Heart left ventricle (tissue), 16 donors: ENCODE measurements at regions of chr3 and their contacts with region 1.

Region 1: DNA sequence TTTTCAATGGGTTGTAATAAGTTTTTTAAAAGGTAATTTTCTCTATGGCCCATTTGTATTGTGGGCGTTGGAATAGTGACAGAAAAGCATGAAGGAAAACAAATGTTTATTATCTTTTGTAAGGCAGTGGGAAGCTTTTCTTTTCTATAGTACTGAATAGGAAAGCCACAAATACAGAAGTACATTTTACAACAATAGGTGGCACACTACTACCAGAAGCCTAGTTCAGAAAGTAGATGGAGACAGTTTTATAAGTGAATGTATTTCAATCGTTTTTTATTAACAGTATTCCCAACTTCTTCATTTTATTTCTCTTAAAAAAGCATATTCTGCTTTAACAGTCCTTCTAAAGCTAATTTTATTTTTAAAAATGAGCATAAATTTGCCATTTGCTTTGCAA is 296.7 kb downstream of the PTPRG start:
- DNase-seq: no peak
- ATAC-seq: peak in 2 of 4 donors; percentile 53 to 59
- H3K4me3 ChIP-seq: no peak overlapping the region
- H3K27ac ChIP-seq: peak overlapping the region in 1 of 12 donors; percentile 10
- H3K4me1 ChIP-seq: peaks cover 0 to 83% (median 40%) of the 10 kb centered on the region in 12 donors
- H3K27me3 ChIP-seq: no peaks in the 10 kb centered on the region
- CTCF ChIP-seq: peak; percentile 34 to 78 (median 66)
- POLR2A ChIP-seq: no peak

Region 2: GRCh38 chr3:61530355-61530754 is 327.7 kb before region 1 on chr3:
- intact Hi-C with region 1: no loop called
- DNase-seq: no peak
- ATAC-seq: no peak
- H3K4me3 ChIP-seq: no peak overlapping the region
- H3K27ac ChIP-seq: no peak overlapping the region
- H3K4me1 ChIP-seq: peaks cover 0 to 9% (median 0%) of the 10 kb centered on the region in 12 donors
- H3K27me3 ChIP-seq: no peaks in the 10 kb centered on the region
- CTCF ChIP-seq: peak; percentile 21 to 65 (median 44)
- POLR2A ChIP-seq: no peak

Region 3: GRCh38 chr3:61841111-61841853 is 16.8 kb before region 1 on chr3:
- intact Hi-C with region 1: no loop called
- DNase-seq: no peak
- ATAC-seq: peak in 3 of 4 donors; percentile 34 to 47 (median 42)
- H3K4me3 ChIP-seq: no peak overlapping the region
- H3K27ac ChIP-seq: no peak overlapping the region
- H3K4me1 ChIP-seq: peaks cover 0 to 61% (median 27%) of the 10 kb centered on the region in 12 donors
- H3K27me3 ChIP-seq: no peaks in the 10 kb centered on the region
- CTCF ChIP-seq: no peak
- POLR2A ChIP-seq: no peak

Region 4: DNA sequence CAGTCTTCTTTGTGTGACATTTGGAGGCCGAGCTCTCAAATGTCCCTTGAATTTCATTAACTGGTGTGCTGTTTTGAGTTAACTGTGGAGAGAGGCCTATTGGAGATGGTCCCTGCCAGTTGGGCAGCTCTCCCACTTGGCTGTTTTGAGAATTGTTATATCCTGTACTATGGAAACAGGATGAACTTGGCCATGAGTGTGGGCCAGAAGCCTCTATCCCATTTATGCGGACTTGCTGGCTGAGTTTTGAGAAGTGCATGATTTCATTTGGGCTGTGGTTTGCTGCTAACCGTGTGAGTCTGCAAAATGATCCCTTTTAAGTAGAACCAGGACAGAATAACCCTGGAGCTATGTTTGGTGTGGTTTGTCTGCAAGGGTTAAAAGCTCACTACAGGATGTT is 69.3 kb after region 1 on chr3:
- intact Hi-C with region 1: loop called in 3 of 10 experiments (anchors 5 to 10 kb)
- DNase-seq: peak; percentile 77 to 90 (median 86)
- ATAC-seq: peak; percentile 90 to 93 (median 92)
- H3K4me3 ChIP-seq: peak overlapping the region in 3 of 12 donors; percentile 6 to 30 (median 13)
- H3K27ac ChIP-seq: peak overlapping the region; percentile 29 to 91 (median 76)
- H3K4me1 ChIP-seq: peaks cover 9 to 73% (median 50%) of the 10 kb centered on the region in 12 donors
- H3K27me3 ChIP-seq: no peaks in the 10 kb centered on the region
- CTCF ChIP-seq: no peak
- POLR2A ChIP-seq: no peak

Region 5: DNA sequence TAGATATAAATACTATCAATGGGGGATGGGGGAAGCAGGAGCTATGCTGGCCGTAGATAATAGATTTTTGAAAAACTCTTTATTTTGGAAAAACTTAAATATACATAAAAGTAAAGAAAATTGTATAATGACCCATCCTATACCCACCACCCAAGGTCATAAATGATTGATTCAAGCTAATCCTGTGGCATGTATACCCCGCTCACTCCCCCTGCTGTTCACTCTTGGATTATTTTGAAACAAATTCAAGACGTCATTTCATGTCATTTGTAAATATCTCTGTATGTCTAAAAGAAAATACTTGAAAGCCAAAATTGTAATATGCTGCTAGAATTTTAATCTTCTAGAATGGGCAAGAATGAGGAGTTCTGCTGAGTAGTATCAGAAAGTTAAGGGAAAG is 273.5 kb after region 1 on chr3:
- intact Hi-C with region 1: loop called in 3 of 10 experiments (anchors 5 to 10 kb)
- DNase-seq: no peak
- ATAC-seq: no peak
- H3K4me3 ChIP-seq: no peak overlapping the region
- H3K27ac ChIP-seq: no peak overlapping the region
- H3K4me1 ChIP-seq: peaks cover 5 to 51% (median 27%) of the 10 kb centered on the region in 12 donors
- H3K27me3 ChIP-seq: no peaks in the 10 kb centered on the region
- CTCF ChIP-seq: peak in 11 of 12 donors; percentile 13 to 59 (median 51)
- POLR2A ChIP-seq: no peak

Region 6: GRCh38 chr3:62159709-62160092 is 301.6 kb after region 1 on chr3:
- intact Hi-C with region 1: loop called in 1 of 10 experiments (anchors 5 kb)
- DNase-seq: peak; percentile 65 to 89 (median 83)
- ATAC-seq: peak; percentile 94 to 96 (median 96)
- H3K4me3 ChIP-seq: no peak overlapping the region
- H3K27ac ChIP-seq: peak overlapping the region; percentile 80 to 93 (median 88)
- H3K4me1 ChIP-seq: peaks cover 6 to 75% (median 53%) of the 10 kb centered on the region in 12 donors
- H3K27me3 ChIP-seq: no peaks in the 10 kb centered on the region
- CTCF ChIP-seq: no peak
- POLR2A ChIP-seq: no peak